Astrocyte of the cerebellum (primary cell): ENCODE measurements at regions of chr4 and their contacts with region 1.

Region 1: GRCh38 chr4:89316931-89317366 is 9.3 kb upstream of the GPRIN3 start:
- DNase-seq: no peak
- H3K4me3 ChIP-seq: no peak overlapping the region
- CTCF ChIP-seq: no peak

Region 2: DNA sequence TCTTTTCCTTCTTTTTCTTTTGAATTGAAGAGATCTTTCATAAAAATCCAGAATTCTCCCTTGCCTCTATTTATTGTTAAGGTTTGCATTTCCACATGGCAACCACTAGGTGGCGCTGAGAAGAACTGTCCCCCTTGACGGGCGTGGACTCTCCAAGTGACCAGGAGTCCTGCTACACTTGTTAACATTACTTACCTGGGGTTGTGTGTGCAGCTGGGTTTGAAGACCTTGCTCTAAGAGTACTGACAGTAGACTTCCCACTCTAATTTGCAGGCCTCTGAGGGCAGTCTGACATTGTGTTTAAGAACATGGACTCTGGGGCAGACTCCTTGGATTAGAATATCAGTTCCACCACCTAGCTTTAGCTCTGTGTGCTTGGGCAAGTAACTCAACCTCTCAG is 62.1 kb before region 1 on chr4:
- in situ Hi-C with region 1: loop called (anchors 5 kb)
- DNase-seq: no peak
- H3K4me3 ChIP-seq: no peak overlapping the region
- CTCF ChIP-seq: peak; percentile 65

Region 3: DNA sequence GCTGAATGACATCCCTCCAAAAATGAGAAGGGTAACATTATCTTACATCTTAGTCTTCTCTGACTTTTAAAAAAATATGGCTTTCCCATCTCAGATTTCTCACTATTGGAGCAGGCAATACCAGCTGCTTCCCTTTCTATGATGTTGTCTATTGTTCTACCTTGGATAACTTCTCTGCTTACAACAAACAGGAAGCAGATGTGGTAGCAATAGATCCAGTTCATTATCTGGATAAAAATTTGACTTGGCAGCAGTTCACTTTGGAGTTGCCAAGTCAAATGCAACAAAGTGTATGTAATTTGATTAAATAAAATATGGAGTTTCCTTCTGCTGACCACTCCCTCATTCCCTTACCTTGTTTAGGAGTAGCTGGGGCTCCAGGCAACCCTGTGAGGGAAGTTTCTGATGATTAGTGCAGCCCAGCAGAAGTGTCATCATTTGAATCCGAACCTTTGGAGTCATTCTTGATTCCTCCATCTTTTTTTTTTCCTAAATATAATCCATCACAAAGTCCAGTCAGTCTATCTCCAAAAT is 62.6 kb after region 1 on chr4:
- in situ Hi-C with region 1: no loop called
- DNase-seq: no peak
- H3K4me3 ChIP-seq: no peak overlapping the region
- CTCF ChIP-seq: no peak